HepG2 (cell line): ENCODE measurements at regions of chr1 and their contacts with region 1.

Region 1: DNA sequence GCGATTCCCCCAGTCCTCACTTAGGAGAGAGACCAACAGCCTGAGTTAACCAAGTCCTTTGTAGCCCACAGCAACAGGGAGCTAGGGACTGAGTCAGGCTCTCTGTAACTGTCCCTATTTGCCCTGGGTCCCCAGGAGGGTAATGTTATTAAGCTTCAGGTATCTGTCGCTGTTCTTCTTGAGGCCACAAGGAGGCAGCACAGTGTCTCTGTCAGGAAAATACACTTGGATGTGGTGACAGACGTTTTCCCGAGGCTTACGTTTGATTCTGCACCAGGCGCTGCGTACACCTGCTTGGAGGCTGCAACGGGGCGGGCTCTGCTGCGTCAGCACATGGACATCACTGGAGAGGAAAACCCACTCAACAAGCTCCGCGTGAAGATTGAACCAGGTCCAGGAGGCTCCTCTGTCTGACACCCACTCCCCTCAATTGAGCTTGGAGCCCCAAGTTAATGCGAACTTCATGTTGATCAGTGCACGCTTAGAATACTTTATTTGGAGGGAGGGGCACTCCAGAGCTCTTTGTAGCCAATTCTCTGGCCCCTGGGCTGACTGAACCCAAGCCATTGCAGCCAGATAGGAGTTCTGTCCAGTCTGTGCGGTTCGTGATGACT is 10.7 kb upstream of the ELF3 start:
- DNase-seq: peak; percentile 64
- ATAC-seq: peak; percentile 90
- H3K4me3 ChIP-seq: no peak overlapping the region
- H3K27ac ChIP-seq: no peak overlapping the region
- H3K4me1 ChIP-seq: no peaks in the 10 kb centered on the region
- H3K27me3 ChIP-seq: no peaks in the 10 kb centered on the region
- CTCF ChIP-seq: peak; percentile 84
- EP300 ChIP-seq: no peak
- POLR2A ChIP-seq: peak in 1 of 2 experiments; percentile 43; a peak in 1 of 4 replicates
- RAD21 ChIP-seq: peak; percentile 50; the same call in 1 of the 2 replicates

Region 2: DNA sequence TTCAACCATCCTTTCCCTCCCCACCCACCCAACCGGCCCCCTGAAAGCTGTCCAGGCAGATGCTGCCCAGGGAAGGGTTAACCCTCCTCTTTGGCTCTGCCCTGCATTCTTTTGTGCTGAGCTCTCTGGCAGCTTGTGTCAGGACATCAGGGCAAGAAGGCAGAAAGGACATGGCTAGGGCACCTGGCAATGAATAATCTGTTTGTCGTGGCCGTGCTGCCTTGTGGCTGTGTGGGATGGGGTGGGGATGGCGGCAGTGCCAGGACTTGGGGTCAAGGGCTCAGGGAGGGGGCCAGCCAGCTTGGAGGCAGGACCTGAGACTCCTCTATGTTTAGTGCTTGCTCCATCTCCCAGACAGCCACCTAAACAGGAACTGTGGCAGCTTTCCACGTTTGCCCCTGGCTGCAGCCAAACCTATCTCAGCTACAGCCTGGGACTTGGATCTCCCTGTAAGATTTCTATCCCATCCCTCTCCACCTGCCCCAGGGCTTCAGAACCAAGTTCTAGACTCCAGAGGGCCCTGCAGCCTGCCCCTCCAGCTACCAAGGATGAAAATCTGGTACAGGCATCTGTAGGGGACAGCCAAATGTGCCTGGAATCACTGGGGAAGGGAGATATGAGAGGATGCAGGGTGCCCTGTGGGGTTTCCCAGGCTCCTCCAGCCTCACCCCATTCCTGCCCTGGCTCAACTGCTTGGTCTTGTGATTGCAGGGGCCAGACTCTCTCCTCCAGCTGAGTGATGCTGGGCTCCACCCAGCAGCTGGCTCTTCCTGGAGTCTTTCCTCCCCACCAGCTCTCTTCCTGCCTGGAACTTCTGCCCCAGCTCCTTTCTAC is 113.3 kb after region 1 on chr1:
- CTCF ChIA-PET with region 1: interaction called, 42 read pairs
- POLR2A ChIA-PET with region 1: no interaction called
- in situ Hi-C with region 1: no loop called
- intact Hi-C with region 1: no loop called
- DNase-seq: no peak
- ATAC-seq: peak; percentile 58
- H3K4me3 ChIP-seq: no peak overlapping the region; a peak in 1 of 6 replicates
- H3K27ac ChIP-seq: no peak overlapping the region
- H3K4me1 ChIP-seq: peaks cover 64% of the 10 kb centered on the region
- H3K27me3 ChIP-seq: peaks cover 0 to 2% of the 10 kb centered on the region in 2 experiments; a peak in 1 of 5 replicates
- CTCF ChIP-seq: no peak
- EP300 ChIP-seq: no peak
- POLR2A ChIP-seq: no peak
- RAD21 ChIP-seq: no peak

Region 3: GRCh38 chr1:202135221-202135721 is 135.5 kb after region 1 on chr1:
- CTCF ChIA-PET with region 1: interaction called, 4 read pairs
- POLR2A ChIA-PET with region 1: no interaction called
- in situ Hi-C with region 1: no loop called
- intact Hi-C with region 1: loop called (anchors 1 kb)
- DNase-seq: peak; percentile 52
- ATAC-seq: peak; percentile 92
- H3K4me3 ChIP-seq: no peak overlapping the region
- H3K27ac ChIP-seq: no peak overlapping the region
- H3K4me1 ChIP-seq: 0 out of 2 replicates have a peak, but pooled peaks cover 6% of the 10 kb centered on the region
- H3K27me3 ChIP-seq: no peaks in the 10 kb centered on the region
- CTCF ChIP-seq: peak; percentile 86
- EP300 ChIP-seq: no peak
- POLR2A ChIP-seq: no peak
- RAD21 ChIP-seq: peak; percentile 58